K562 (cell line): ENCODE measurements at regions of chr1 and their contacts with region 1.

Region 1: DNA sequence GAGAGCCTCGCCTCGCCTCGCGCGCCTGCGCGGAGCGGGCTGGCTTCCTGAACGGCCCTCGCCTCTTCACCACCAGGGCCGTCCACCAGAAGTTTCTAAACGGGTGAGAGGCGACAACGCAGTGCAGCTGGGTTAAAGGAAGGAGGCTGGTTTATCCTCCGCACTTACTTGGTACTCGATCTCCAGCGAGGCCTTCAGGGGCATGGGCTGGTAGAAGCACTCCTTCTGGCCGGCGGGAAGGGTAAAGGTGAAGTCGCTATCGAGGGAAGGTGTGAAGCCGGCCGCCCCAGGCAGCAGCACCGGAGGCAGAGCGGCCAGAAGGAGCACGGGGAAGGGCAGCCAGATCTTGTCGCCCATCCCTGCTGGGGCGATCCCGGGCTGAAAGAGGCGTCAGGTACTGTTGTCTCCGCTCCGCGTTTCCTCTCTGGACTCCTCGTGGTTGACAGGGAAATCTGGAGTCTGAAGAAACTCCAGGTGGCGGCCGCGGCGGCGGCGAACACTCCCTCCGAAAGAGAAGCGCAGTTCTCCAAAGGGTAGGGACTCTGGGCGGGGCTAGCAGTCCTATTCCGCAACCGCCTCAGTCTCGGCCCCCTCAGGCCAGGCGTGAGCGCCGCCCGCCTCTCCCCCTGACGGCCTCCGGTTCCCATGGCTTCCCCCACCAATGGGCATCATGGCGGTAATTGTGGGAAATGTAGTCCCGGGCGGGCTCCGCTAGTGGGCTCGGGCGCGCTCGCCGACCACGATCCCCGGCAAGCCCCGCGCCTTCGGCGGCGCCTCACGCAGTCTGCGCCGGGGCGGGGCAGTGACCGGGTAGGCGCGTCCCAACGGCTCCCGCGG is at the start of gene TMED5:
- DNase-seq: peak; percentile 87 to 98 (median 90)
- ATAC-seq: peak; percentile 92
- H3K4me3 ChIP-seq: peak within 1 kb of the TSS; percentile 70
- H3K27ac ChIP-seq: peak within 1 kb of the TSS; percentile 97
- H3K4me1 ChIP-seq: peaks cover 11 to 14% of the 10 kb centered on the region in 2 experiments; a peak in 2 of 5 replicates
- H3K27me3 ChIP-seq: no peaks in the 10 kb centered on the region
- CTCF ChIP-seq: 0 out of 6 replicates have a peak, but pooled peaks of 1 of the 3 experiments have one; percentile 23
- EP300 ChIP-seq: peak; percentile 51
- POLR2A ChIP-seq: peak; percentile 86
- RAD21 ChIP-seq: no peak
- polyA plus RNA-seq, gene TMED5: 28.7 to 43.9 TPM

Region 2: DNA sequence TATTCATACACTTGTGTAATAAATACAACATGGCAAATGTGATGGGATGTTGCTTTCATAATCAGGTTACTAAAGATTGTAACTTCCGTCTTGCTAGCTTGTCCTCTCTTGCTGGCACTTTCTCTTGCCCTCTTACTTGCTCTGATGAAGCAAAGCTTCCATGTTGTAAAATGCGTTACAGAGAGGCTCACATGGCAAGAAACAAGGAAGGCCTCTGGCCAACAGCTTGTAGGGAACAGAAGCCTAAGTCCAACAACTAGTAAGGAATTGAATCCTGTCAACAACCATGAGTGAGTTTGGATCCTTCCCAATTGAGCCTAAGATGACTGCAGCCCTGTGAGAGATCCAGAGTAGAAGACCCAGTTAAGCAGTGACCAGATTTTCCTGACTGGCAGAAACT is 15.3 kb before region 1 on chr1:
- CTCF ChIA-PET with region 1: no interaction called
- POLR2A ChIA-PET with region 1: interaction called, 11 read pairs
- in situ Hi-C with region 1: no loop called
- intact Hi-C with region 1: no loop called
- DNase-seq: no peak
- ATAC-seq: no peak
- H3K4me3 ChIP-seq: no peak overlapping the region
- H3K27ac ChIP-seq: no peak overlapping the region
- H3K4me1 ChIP-seq: 0 out of 5 replicates have a peak, but pooled peaks cover 0 to 2% of the 10 kb centered on the region in 2 experiments
- H3K27me3 ChIP-seq: no peaks in the 10 kb centered on the region
- CTCF ChIP-seq: no peak
- EP300 ChIP-seq: no peak
- POLR2A ChIP-seq: no peak
- RAD21 ChIP-seq: no peak

Region 3: DNA sequence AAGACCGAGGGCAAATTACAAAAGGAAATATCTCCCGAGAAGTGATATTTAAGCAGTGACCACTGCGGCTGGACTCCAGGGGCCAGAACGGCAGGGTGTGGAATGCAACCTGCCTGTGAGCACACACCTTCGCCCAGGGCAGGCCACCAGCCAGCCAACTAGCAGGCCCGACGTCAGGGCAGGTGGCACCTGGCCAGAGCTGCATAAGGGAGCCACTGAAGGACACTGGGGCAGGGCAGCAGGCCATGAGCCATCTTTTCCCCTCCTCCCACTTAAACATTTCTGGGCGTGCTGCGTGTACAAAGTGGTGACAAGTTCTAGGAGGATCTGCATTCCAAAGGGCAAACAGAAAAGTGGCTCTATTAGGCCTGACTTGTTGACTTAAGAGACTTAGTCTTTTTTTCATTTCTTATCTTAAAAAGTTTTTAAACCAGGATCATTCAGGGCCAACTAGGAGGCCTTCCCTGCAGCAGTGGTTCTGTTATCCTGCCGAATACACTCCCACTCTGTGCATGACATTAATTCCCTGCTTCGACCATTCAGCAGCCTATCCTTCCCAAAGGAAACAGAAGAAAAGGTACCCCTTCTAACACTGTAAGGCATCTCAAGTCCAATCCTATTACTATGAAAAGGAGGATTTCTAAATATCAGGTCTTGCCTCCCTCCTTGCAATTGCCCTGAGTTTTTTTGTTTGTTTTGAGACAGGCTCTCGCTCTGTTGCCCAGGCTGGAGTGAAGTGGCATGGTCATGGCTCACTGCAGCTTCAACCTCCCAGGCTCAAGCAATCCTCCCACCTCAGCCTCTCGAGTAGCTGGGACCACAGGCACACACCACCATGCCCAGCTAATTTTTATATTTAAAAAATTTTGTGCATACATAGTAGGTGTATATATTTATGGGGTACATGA is 405.2 kb after region 1 on chr1:
- CTCF ChIA-PET with region 1: no interaction called
- POLR2A ChIA-PET with region 1: no interaction called
- in situ Hi-C with region 1: no loop called
- intact Hi-C with region 1: no loop called
- DNase-seq: no peak
- ATAC-seq: peak; percentile 15; the same call in 1 of the 3 replicates
- H3K4me3 ChIP-seq: no peak overlapping the region
- H3K27ac ChIP-seq: no peak overlapping the region
- H3K4me1 ChIP-seq: peaks cover 0 to 14% of the 10 kb centered on the region in 2 experiments; a peak in 3 of 5 replicates
- H3K27me3 ChIP-seq: no peaks in the 10 kb centered on the region
- CTCF ChIP-seq: no peak
- EP300 ChIP-seq: no peak
- POLR2A ChIP-seq: no peak
- RAD21 ChIP-seq: no peak